Activated T-helper 2 cell treated with anti-CD3 and anti-CD28 coated beads, Interferon-gamma antibody, Interleukin-2, Interleukin-4, amounts not matched to agents 10 μg/mL and 5 μg/mL and 100 μg/mL, durations not matched to agents 14 hours and 24 hours and 36 hours (primary cell): ENCODE measurements at regions of chr14 and their contacts with region 1.

Region 1: DNA sequence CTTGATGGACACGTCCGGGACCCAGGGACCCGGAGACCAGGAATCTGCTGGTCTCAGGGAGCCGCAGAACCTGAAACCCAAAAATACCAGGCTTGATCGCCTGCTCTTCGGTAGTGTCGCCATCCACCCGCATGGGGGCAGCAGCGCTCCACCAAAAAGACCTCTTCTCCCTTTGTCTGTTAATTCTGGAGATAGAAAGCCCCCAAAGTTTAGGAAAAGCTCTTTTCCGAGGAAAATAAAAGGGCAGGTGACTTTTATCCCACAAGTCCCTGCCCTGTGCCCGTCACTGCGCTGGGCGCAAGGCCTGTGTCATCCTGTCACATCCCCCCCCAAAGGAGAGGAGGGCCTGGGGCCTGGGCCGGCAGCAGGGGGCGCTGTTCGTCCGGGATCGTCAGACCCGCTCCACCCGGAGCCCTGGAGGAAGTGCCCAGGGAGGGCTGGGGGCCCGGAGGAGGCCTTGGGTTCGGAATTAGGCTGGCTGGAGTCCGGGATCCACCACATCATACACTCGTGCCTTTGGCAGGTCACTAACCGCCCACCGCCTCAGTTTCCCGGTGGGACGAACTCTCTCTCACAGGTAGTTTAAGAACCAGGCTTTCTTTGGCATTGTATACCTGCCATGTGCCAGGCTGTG is 31.9 kb downstream of the DAD1 start:
- DNase-seq: peak; percentile 87
- H3K4me3 Mint-ChIP-seq: peak overlapping the region; percentile 81
- H3K27ac Mint-ChIP-seq: peak overlapping the region; percentile 98
- H3K4me1 Mint-ChIP-seq: peaks cover 88% of the 10 kb centered on the region
- H3K27me3 Mint-ChIP-seq: peaks cover 3% of the 10 kb centered on the region

Region 2: DNA sequence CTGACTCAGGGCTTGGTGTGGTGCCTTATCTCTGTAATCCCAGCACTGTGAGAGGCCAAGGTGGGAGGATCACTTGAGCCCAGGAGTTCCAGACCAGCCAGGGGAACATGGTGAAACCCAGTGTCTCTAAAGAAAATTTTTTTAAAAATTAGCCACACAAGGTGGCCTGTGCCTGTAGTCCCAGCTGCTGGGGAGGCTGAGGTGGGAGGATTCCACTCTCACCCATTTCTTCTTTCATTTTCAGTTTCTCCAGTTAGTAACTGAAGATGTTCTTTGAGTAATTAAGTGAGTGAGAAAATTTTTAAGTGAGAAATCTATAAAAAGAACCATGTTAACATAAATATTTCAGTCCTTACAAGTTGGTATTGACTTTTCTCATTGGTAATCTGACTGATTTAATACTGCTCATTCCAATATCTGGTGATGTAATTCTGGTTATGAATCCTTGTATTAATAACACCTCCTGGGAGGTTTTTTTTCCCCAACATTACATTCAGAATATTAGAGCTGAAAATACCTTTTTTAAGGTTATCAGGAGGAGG is 1052.0 kb before region 1 on chr14:
- intact Hi-C with region 1: loop called (anchors 2 kb)
- DNase-seq: no peak
- H3K4me3 Mint-ChIP-seq: peak overlapping the region; percentile 62
- H3K27ac Mint-ChIP-seq: peak overlapping the region; percentile 77
- H3K4me1 Mint-ChIP-seq: peaks cover 37% of the 10 kb centered on the region
- H3K27me3 Mint-ChIP-seq: no peaks in the 10 kb centered on the region

Region 3: DNA sequence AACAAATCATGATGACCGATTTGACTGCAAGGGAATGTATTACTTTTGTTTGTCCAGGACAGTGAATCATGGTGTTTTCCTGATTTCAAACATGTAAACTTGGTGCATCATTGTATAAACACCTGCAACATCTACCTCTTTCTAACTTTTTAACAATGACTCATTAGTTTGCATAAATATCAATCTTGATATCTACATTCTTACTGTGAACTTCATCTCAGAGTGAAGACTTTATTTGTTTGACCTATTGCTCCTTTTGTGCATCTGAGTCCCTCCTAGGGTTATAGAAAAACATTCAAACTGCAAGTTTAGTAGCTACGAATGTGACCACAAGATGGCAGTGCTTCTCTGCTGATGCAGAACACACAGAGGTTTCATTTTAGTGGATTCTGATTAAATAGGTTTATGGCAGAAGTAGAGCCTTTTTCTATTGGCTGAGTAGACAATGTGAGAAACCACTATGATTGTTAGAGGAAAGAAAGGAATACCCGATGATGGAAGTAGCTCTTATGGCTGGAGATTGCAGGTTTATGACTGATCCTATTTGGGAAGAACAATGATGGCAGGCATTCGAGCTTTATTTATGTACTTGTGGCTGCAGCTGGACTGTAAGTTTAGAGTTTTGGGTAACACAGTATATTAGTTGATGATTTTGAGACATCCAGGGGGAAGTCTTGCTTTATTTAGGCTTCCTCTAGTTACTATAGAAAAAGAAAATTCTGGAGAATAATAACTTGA is 639.2 kb before region 1 on chr14:
- intact Hi-C with region 1: loop called (anchors 2 kb)
- DNase-seq: peak; percentile 52
- H3K4me3 Mint-ChIP-seq: peak overlapping the region; percentile 75
- H3K27ac Mint-ChIP-seq: peak overlapping the region; percentile 64
- H3K4me1 Mint-ChIP-seq: peaks cover 55% of the 10 kb centered on the region
- H3K27me3 Mint-ChIP-seq: no peaks in the 10 kb centered on the region

Region 4: DNA sequence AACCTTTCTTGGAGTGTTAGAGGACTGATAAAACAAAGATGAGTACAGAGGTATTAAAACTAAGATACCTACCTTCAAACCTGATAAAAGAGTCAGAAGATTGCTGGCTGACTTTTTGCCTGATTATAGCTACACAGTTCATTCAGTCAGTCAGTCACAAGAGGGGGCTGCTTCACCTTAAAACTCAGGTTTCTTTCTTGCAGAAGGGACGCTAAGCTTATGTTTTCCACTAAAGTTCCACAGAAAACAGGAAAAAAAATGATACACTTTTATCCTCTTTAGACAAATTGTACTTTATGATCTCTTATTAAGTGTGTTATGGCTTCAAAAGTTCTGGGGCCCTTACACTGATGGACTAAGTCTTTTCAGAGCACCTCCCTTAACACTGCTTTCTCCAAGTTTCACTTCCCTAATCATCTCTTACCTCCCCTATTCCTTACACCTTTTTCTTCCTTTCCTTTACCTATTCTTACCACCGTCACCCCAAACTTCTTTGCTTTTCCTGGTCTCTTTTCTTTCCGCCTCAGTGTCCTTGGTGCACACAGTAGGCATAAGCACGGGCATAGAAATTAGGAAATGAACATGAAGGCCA is 434.8 kb before region 1 on chr14:
- intact Hi-C with region 1: loop called (anchors 5 kb)
- DNase-seq: no peak
- H3K4me3 Mint-ChIP-seq: peak overlapping the region; percentile 83
- H3K27ac Mint-ChIP-seq: peak overlapping the region; percentile 85
- H3K4me1 Mint-ChIP-seq: peaks cover 26% of the 10 kb centered on the region
- H3K27me3 Mint-ChIP-seq: no peaks in the 10 kb centered on the region

Region 5: DNA sequence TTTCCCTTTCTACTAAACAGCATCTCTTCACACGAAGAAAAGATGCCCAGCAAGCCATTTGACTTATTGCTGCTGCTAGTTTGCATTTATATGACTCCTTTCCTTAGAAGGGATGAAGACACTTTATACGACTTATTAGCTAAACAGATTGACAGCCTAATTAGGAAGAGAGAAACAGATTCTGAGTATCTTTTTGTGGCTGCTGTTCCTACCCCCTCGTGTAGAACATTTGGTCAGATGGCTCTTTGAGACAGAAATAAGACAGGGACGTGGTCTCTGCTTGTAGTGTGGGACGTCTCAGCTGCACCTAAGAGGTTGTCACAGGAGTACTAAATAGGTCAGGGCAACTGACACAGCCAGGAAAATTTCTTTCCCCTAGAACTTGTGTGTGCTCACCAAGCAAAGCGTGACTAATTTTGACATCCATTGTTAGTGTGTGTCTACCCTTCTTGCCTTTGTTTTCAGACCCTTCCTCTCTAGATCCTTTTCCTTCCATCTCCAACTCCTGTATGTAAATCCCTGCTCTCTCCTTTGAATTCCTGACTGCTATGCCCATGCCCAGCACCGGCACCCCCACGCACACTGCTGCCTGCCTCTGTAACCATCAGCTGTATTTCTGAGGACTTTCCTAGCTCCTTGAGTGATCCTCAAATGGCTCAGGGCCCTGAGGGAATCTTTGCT is 51.3 kb before region 1 on chr14:
- intact Hi-C with region 1: loop called (anchors 1 kb)
- DNase-seq: no peak
- H3K4me3 Mint-ChIP-seq: peak overlapping the region; percentile 92
- H3K27ac Mint-ChIP-seq: peak overlapping the region; percentile 100
- H3K4me1 Mint-ChIP-seq: peaks cover 65% of the 10 kb centered on the region
- H3K27me3 Mint-ChIP-seq: no peaks in the 10 kb centered on the region

Region 6: DNA sequence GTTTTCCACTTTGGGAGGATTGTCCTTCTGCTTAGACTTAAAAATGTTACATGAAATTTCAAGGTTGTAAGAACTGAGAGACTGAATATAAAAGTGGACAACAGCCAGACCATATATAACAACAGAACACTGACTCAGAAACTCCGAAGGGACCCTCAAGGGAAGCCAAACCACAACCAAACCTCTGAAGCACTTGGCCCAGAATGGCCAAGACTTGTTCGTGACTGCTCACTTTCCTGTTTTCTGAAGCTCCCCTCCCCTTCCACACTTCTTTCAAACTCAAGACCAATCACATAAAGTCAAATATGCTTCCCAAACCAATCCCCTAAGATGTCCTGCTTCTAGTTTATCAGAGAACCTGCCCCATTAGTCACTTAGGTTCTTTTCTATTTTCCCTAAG is 73.4 kb after region 1 on chr14:
- intact Hi-C with region 1: no loop called
- DNase-seq: no peak
- H3K4me3 Mint-ChIP-seq: no peak overlapping the region
- H3K27ac Mint-ChIP-seq: no peak overlapping the region
- H3K4me1 Mint-ChIP-seq: peaks cover 4% of the 10 kb centered on the region
- H3K27me3 Mint-ChIP-seq: peaks cover 25% of the 10 kb centered on the region

Region 7: DNA sequence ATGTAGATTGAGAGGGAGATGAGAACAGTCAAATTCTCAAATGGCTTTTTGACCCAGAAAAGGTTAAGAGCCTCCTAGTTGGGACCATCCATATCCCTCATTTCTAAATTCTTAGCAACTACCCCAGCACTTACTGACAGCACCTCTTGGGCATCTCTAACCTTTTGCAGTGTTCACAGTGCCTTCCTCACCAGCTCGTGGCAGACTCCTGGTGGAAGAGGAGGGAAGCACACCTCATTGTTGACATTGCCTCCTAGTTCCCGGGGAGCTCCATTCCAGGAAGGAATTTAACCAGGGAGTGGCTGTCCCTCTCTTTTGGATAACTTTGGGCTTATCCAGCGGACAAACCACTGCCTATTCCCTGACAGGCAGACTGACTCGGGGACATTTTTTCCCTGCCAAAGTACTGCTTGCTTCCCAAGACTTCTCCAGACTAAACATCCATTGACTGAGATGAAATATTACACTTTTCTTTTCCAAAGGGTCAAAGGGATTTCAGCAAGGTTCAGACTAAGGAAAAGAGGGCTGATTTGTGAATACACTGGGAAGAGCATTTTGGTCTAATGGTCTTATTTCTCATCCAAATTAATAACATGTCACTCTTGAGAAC is 96.0 kb after region 1 on chr14:
- intact Hi-C with region 1: loop called (anchors 1 kb)
- DNase-seq: peak; percentile 40
- H3K4me3 Mint-ChIP-seq: no peak overlapping the region
- H3K27ac Mint-ChIP-seq: no peak overlapping the region
- H3K4me1 Mint-ChIP-seq: peaks cover 2% of the 10 kb centered on the region
- H3K27me3 Mint-ChIP-seq: no peaks in the 10 kb centered on the region